Heart left ventricle (tissue), 16 donors: ENCODE measurements at regions of chr3 and their contacts with region 1.

Region 1: GRCh38 chr3:184727357-184728009 is 15.6 kb upstream of the MAGEF1 start:
- DNase-seq: peak in 4 of 5 donors; percentile 50 to 66 (median 62)
- ATAC-seq: peak; percentile 58 to 95 (median 86)
- H3K4me3 ChIP-seq: no peak overlapping the region
- H3K27ac ChIP-seq: no peak overlapping the region
- H3K4me1 ChIP-seq: peaks cover 0 to 13% (median 4%) of the 10 kb centered on the region in 12 donors
- H3K27me3 ChIP-seq: no peaks in the 10 kb centered on the region
- CTCF ChIP-seq: peak; percentile 66 to 82 (median 72)
- POLR2A ChIP-seq: no peak

Region 2: GRCh38 chr3:184561061-184561912 is 166.2 kb before region 1 on chr3 and contains the start of gene EPHB3:
- intact Hi-C with region 1: loop called in 3 of 10 experiments (anchors 1 kb)
- DNase-seq: peak; percentile 99 to 100 (median 99)
- ATAC-seq: peak; percentile 96 to 98 (median 98)
- H3K4me3 ChIP-seq: peak within 1 kb of the TSS; percentile 41 to 82 (median 66)
- H3K27ac ChIP-seq: peak within 1 kb of the TSS in 8 of 12 donors; percentile 29 to 73 (median 60)
- H3K4me1 ChIP-seq: peaks cover 0 to 44% (median 22%) of the 10 kb centered on the region in 12 donors
- H3K27me3 ChIP-seq: peaks cover 0 to 25% (median 4%) of the 10 kb centered on the region in 9 donors
- CTCF ChIP-seq: peak; percentile 91 to 100 (median 100)
- POLR2A ChIP-seq: peak; percentile 76 to 95
- total RNA-seq, gene EPHB3: 1.00 to 4.6 (median 2.4) TPM

Region 3: DNA sequence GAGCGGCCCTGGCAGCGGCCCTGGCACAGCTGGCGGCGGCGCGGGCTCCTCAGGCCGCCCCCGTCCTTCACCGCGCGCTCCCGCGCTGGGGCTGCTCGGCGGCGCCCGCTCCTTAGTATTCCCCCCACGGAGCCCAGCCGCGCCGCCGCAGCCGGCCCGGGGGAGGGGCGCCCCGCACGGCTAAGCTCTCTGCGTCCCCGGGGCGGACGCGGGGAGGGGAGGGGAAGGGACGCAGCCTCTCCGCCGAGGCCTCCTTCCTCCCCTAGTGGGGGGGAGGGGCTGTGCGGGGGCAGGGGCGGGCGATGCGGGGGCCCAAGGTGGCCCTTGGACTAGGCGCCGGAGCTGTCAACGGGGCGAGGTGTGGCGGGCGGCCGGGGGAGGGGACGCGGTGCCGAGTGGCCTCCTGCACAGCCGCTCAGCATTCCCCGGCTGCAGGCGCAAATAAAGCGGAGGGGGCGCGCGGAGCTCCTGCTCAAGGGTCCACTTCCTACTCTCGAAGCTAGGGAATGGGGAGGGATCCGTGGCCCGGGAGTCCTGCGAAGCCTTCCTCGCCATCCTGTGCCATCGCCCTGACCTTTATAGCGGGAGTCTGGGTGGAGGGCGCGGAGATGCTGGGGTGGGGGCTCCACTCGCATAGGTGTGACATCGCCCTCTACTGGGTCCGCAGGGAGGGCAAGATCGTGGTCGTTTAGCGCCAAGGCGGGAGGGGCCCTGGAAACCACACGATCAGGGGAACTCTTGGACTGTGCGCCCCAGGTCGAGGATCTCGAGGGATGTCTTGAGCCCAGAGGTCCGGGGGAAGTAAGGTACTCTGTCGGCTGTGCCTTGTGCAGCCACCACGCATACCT is 143.7 kb before region 1 on chr3:
- intact Hi-C with region 1: loop called in 1 of 10 experiments (anchors 5 kb)
- DNase-seq: peak; percentile 54 to 80 (median 70)
- ATAC-seq: peak; percentile 32 to 75 (median 72)
- H3K4me3 ChIP-seq: peak overlapping the region; percentile 30 to 77 (median 64)
- H3K27ac ChIP-seq: peak overlapping the region in 11 of 12 donors; percentile 73 to 89 (median 84)
- H3K4me1 ChIP-seq: peaks cover 0 to 36% (median 10%) of the 10 kb centered on the region in 12 donors
- H3K27me3 ChIP-seq: peaks cover 0 to 20% (median 0%) of the 10 kb centered on the region in 9 donors
- CTCF ChIP-seq: peak in 5 of 12 donors; percentile 22 to 47 (median 30)
- POLR2A ChIP-seq: no peak

Region 4: DNA sequence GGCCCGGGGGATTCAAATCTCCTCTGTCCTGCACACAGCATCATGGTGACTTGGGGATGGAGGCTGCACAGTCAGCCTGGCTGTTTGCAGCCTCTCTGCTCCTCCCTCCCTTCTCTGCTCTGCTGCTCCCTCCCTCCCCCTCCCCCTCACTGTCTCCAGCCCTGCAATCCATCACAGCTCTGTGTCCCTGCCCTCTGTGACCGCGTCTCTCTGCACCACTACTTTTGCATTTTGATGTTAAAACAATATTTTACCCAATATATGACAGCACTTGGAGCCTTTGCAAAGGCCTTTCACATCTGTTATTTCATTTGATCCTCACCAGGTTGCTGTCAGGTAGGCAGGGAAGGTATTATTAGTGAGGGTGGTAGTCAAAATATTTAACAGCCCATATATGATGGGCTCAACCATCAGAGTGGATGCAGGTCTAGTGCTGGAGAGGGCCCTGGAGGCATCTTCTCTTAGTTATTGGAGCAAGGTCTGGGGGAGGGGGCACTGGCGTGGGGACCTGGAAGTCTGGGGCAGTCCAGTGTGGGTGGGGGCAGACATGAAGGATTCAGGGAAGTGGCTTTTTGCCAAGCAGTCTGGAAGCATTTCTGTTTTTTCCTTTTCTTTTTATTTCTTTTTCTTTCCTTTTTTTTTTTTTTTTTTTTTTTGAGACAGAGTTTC is 68.2 kb after region 1 on chr3:
- intact Hi-C with region 1: no loop called
- DNase-seq: no peak
- ATAC-seq: peak in 2 of 4 donors; percentile 22 to 46
- H3K4me3 ChIP-seq: no peak overlapping the region
- H3K27ac ChIP-seq: no peak overlapping the region
- H3K4me1 ChIP-seq: no peaks in the 10 kb centered on the region
- H3K27me3 ChIP-seq: peaks cover 0 to 8% (median 0%) of the 10 kb centered on the region in 9 donors
- CTCF ChIP-seq: no peak
- POLR2A ChIP-seq: no peak